Cardiac septum (tissue), 1 donor: ENCODE measurements at regions of chr3 and their contacts with region 1.

Region 1: GRCh38 chr3:172317984-172318383 is 130.3 kb downstream of the GHSR start:
- DNase-seq: no peak

Region 2: GRCh38 chr3:172129870-172130683 is 187.9 kb before region 1 on chr3:
- intact Hi-C with region 1: loop called (anchors 5 kb)
- DNase-seq: peak; percentile 95

Region 3: GRCh38 chr3:172201136-172201869 is 116.7 kb before region 1 on chr3:
- intact Hi-C with region 1: loop called (anchors 5 kb)
- DNase-seq: peak; percentile 90

Region 4: DNA sequence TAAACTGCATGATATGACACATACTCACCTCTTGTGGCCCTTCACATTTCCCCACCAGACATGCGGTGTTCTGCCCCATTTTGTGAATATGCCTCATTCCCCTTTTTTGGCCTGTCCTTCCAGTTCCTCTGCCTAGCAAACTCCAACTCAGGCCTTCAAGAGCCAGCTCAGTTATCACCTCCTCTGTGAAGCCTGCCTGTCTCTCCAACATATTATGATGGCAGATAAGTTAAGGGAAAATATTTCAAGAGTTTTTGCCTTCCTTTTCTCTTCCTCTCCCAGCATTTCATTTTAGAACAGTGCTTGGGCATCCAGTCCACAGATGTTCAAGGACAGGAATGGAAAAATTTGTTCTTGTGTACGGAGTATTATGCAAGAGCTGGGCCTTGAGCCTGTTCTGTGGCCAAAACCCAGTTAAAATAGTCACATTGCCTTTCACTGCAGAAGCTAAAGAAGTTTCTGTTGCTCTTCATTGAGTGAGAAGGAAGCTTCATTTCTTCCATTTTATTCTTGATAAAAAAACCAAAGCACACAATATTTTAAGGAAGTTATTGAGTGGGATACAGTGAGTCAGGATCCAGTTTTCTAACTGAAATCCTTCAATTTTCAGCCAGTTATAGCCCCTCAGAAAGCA is 61.8 kb before region 1 on chr3:
- intact Hi-C with region 1: loop called (anchors 5 kb)
- DNase-seq: no peak

Region 5: GRCh38 chr3:172289582-172289981 is 28.4 kb before region 1 on chr3:
- intact Hi-C with region 1: loop called (anchors 2 kb)
- DNase-seq: peak; percentile 83